Activated T-helper 1 cell treated with anti-CD3 and anti-CD28 coated beads, Interleukin-12 subunit alpha, Interleukin-12 subunit beta, Interleukin-2, Interleukin-4 antibody, amounts not matched to agents 30 ng/mL and 10 ng/mL and 1 ng/mL, durations not matched to agents 14 hours and 24 hours and 36 hours (primary cell): ENCODE measurements at regions of chrX and their contacts with region 1.

Region 1: GRCh38 chrX:100819837-100820666 is at the start of gene CSTF2:
- DNase-seq: peak; percentile 74
- H3K4me3 Mint-ChIP-seq: peak within 1 kb of the TSS; percentile 84
- H3K27ac Mint-ChIP-seq: peak within 1 kb of the TSS; percentile 95
- H3K4me1 Mint-ChIP-seq: peaks cover 7% of the 10 kb centered on the region
- H3K27me3 Mint-ChIP-seq: peaks cover 3% of the 10 kb centered on the region
- total RNA-seq, gene CSTF2: 70.3 and 72.1 TPM in 2 replicates

Region 2: GRCh38 chrX:99901091-99901490 is 919.0 kb before region 1 on chrX:
- intact Hi-C with region 1: no loop called
- DNase-seq: no peak
- H3K4me3 Mint-ChIP-seq: no peak overlapping the region
- H3K27ac Mint-ChIP-seq: no peak overlapping the region
- H3K4me1 Mint-ChIP-seq: no peaks in the 10 kb centered on the region
- H3K27me3 Mint-ChIP-seq: no peaks in the 10 kb centered on the region

Region 3: GRCh38 chrX:100928660-100929613 is 108.9 kb after region 1 on chrX and contains the start of gene XKRX:
- intact Hi-C with region 1: loop called (anchors 2 kb)
- DNase-seq: peak; percentile 5
- H3K4me3 Mint-ChIP-seq: peak within 1 kb of the TSS; percentile 85
- H3K27ac Mint-ChIP-seq: peak within 1 kb of the TSS; percentile 34
- H3K4me1 Mint-ChIP-seq: peaks cover 22% of the 10 kb centered on the region
- H3K27me3 Mint-ChIP-seq: no peaks in the 10 kb centered on the region
- total RNA-seq, gene XKRX: 0.39 and 0.51 TPM in 2 replicates

Region 4: GRCh38 chrX:100946299-100946920 is 126.4 kb after region 1 on chrX:
- intact Hi-C with region 1: no loop called
- DNase-seq: no peak
- H3K4me3 Mint-ChIP-seq: no peak overlapping the region
- H3K27ac Mint-ChIP-seq: no peak overlapping the region
- H3K4me1 Mint-ChIP-seq: no peaks in the 10 kb centered on the region
- H3K27me3 Mint-ChIP-seq: peaks cover 2% of the 10 kb centered on the region

Region 5: DNA sequence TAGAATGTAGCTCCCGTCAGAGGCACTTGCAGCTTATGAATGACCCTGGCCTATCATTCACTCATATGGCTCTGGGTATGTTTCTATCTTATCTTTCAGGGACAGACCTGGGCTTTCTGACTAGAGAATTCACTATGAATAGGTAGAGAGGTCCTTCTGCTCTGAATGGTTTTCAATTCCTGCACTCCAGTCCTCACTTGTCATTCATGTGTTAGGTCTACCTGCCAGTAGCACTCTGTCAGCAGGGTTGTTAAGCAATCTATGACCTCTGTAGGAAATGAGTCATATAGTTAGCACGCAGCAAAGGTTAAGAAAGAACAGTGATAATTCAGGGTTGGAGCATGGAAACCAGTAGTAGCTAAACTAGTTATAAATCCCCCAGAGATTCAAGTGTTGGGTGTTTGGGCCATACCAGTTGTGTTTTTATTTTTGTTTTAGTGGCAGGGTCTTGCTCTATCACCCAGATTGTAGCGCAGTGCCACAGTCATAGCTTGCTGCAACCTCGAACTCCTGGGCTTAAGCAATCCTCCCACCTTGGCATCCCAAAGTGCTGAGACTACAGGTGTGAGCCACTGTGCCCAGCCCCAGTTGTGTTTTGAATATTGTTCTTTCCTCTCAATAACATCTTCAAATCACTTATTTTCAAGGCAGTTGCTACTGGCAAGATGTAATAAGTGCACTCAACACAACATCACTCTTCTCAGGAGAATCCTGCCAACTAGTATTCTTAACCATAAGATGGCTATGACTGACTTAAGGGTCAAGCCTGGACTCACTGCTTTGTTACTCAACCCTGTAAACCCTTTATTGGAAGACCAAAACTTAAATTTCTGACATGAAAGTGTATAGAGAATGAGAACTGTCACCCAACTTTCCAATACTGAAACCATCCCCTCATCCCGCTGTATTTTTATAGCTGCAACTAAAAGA is 174.6 kb after region 1 on chrX:
- intact Hi-C with region 1: loop called (anchors 2 kb)
- DNase-seq: no peak
- H3K4me3 Mint-ChIP-seq: peak overlapping the region; percentile 30
- H3K27ac Mint-ChIP-seq: peak overlapping the region; percentile 82
- H3K4me1 Mint-ChIP-seq: peaks cover 30% of the 10 kb centered on the region
- H3K27me3 Mint-ChIP-seq: no peaks in the 10 kb centered on the region

Region 6: GRCh38 chrX:101051549-101052302 is 231.7 kb after region 1 on chrX and contains the start of gene TRMT2B:
- intact Hi-C with region 1: loop called (anchors 2 kb)
- DNase-seq: peak; percentile 72
- H3K4me3 Mint-ChIP-seq: peak within 1 kb of the TSS; percentile 88
- H3K27ac Mint-ChIP-seq: peak within 1 kb of the TSS; percentile 93
- H3K4me1 Mint-ChIP-seq: peaks cover 17% of the 10 kb centered on the region
- H3K27me3 Mint-ChIP-seq: no peaks in the 10 kb centered on the region
- total RNA-seq, gene TRMT2B: 17.2 and 19.3 TPM in 2 replicates

Region 7: GRCh38 chrX:101348452-101349192 is 528.6 kb after region 1 on chrX and contains the start of gene TIMM8A:
- intact Hi-C with region 1: loop called (anchors 2 kb)
- DNase-seq: peak; percentile 72
- H3K4me3 Mint-ChIP-seq: peak within 1 kb of the TSS; percentile 90
- H3K27ac Mint-ChIP-seq: peak within 1 kb of the TSS; percentile 80
- H3K4me1 Mint-ChIP-seq: peaks cover 5% of the 10 kb centered on the region
- H3K27me3 Mint-ChIP-seq: no peaks in the 10 kb centered on the region
- total RNA-seq, gene TIMM8A: 30.9 and 36.5 TPM in 2 replicates

Region 8: GRCh38 chrX:101390664-101391525 is 570.8 kb after region 1 on chrX and contains the start of gene RPL36A:
- intact Hi-C with region 1: loop called (anchors 1 kb)
- DNase-seq: peak; percentile 75
- H3K4me3 Mint-ChIP-seq: peak within 1 kb of the TSS; percentile 98
- H3K27ac Mint-ChIP-seq: peak within 1 kb of the TSS; percentile 94
- H3K4me1 Mint-ChIP-seq: peaks cover 7% of the 10 kb centered on the region
- H3K27me3 Mint-ChIP-seq: peaks cover 2% of the 10 kb centered on the region
- total RNA-seq, gene RPL36A: 226 and 269 TPM in 2 replicates